PC-9 (cell line): ENCODE measurements at regions of chr9 and their contacts with region 1.

Region 1: DNA sequence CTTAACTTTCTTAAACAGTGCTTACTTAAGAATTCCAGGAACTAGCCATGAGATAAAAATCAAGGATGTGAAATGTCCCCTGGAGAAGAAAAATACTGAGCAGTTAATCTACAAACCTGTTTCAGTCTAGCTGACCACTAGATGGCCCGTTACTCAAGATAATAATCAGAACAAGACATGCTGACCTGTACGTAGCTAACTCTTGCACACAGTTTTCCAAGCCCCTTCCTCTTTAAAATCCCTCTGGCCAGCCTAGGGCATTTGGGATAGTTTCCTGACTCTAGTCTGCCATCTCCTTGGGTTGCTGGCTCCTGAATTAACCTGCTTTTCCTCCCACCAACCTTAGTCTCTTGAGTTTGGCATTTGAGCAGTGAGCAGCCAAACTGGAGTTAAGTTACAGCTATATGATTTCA is 59.2 kb upstream of the TRAF1 start:
- DNase-seq: peak; percentile 17 to 57
- H3K4me3 ChIP-seq: no peak overlapping the region
- H3K27ac ChIP-seq: no peak overlapping the region
- H3K4me1 ChIP-seq: no peaks in the 10 kb centered on the region
- H3K27me3 ChIP-seq: no peaks in the 10 kb centered on the region
- CTCF ChIP-seq: peak; percentile 70

Region 2: GRCh38 chr9:120856700-120857099 is 129.1 kb before region 1 on chr9:
- CTCF ChIA-PET with region 1: no interaction called
- POLR2A ChIA-PET with region 1: no interaction called
- intact Hi-C with region 1: no loop called
- DNase-seq: no peak
- H3K4me3 ChIP-seq: no peak overlapping the region
- H3K27ac ChIP-seq: no peak overlapping the region
- H3K4me1 ChIP-seq: no peaks in the 10 kb centered on the region
- H3K27me3 ChIP-seq: no peaks in the 10 kb centered on the region
- CTCF ChIP-seq: no peak

Region 3: GRCh38 chr9:121059998-121060636 is 74.3 kb after region 1 on chr9:
- CTCF ChIA-PET with region 1: interaction called, 20 read pairs
- POLR2A ChIA-PET with region 1: no interaction called
- intact Hi-C with region 1: loop called (anchors 2 kb)
- DNase-seq: peak; percentile 26 to 62
- H3K4me3 ChIP-seq: no peak overlapping the region
- H3K27ac ChIP-seq: no peak overlapping the region
- H3K4me1 ChIP-seq: no peaks in the 10 kb centered on the region
- H3K27me3 ChIP-seq: no peaks in the 10 kb centered on the region
- CTCF ChIP-seq: peak; percentile 82

Region 4: GRCh38 chr9:121376214-121376830 is 390.5 kb after region 1 on chr9:
- CTCF ChIA-PET with region 1: interaction called, 10 read pairs
- POLR2A ChIA-PET with region 1: no interaction called
- intact Hi-C with region 1: no loop called
- DNase-seq: no peak
- H3K4me3 ChIP-seq: no peak overlapping the region
- H3K27ac ChIP-seq: no peak overlapping the region
- H3K4me1 ChIP-seq: peaks cover 23% of the 10 kb centered on the region
- H3K27me3 ChIP-seq: no peaks in the 10 kb centered on the region
- CTCF ChIP-seq: peak; percentile 63

Region 5: GRCh38 chr9:121399883-121400607 is 414.2 kb after region 1 on chr9:
- CTCF ChIA-PET with region 1: interaction called, 5 read pairs
- POLR2A ChIA-PET with region 1: no interaction called
- intact Hi-C with region 1: loop called (anchors 1 kb)
- DNase-seq: peak in 1 of 2 experiments; percentile 68
- H3K4me3 ChIP-seq: no peak overlapping the region
- H3K27ac ChIP-seq: no peak overlapping the region
- H3K4me1 ChIP-seq: no peaks in the 10 kb centered on the region
- H3K27me3 ChIP-seq: no peaks in the 10 kb centered on the region
- CTCF ChIP-seq: peak; percentile 80